ENCODE measurements at regions of chr16 and their contacts with region 1.

Region 1: GRCh38 chr16:53022374-53022773 is 30.3 kb downstream of the CHD9NB start:
- DNase-seq: peak; percentile 13
- ATAC-seq: peak; percentile 87
- H3K4me3 ChIP-seq: no peak overlapping the region
- H3K27ac ChIP-seq: no peak overlapping the region
- H3K4me1 ChIP-seq: no peaks in the 10 kb centered on the region
- H3K27me3 ChIP-seq: no peaks in the 10 kb centered on the region
- CTCF ChIP-seq: peak; percentile 70

Region 2: GRCh38 chr16:52068447-52069074 is 953.8 kb before region 1 on chr16:
- CTCF ChIA-PET with region 1: no interaction called
- POLR2A ChIA-PET with region 1: no interaction called
- in situ Hi-C with region 1: no loop called
- intact Hi-C with region 1: loop called (anchors 10 kb)
- DNase-seq: no peak
- ATAC-seq: no peak
- H3K4me3 ChIP-seq: no peak overlapping the region
- H3K27ac ChIP-seq: no peak overlapping the region
- H3K4me1 ChIP-seq: no peaks in the 10 kb centered on the region
- H3K27me3 ChIP-seq: no peaks in the 10 kb centered on the region
- CTCF ChIP-seq: peak; percentile 32; the same call in 1 of the 2 replicates

Region 3: GRCh38 chr16:52191531-52192134 is 830.7 kb before region 1 on chr16:
- CTCF ChIA-PET with region 1: interaction called, 3 read pairs
- POLR2A ChIA-PET with region 1: no interaction called
- in situ Hi-C with region 1: no loop called
- intact Hi-C with region 1: loop called (anchors 5 kb)
- DNase-seq: peak; percentile 43
- ATAC-seq: no peak
- H3K4me3 ChIP-seq: no peak overlapping the region
- H3K27ac ChIP-seq: no peak overlapping the region
- H3K4me1 ChIP-seq: no peaks in the 10 kb centered on the region
- H3K27me3 ChIP-seq: no peaks in the 10 kb centered on the region
- CTCF ChIP-seq: peak; percentile 84

Region 4: GRCh38 chr16:52964290-52964689 is 58.1 kb before region 1 on chr16:
- CTCF ChIA-PET with region 1: no interaction called
- POLR2A ChIA-PET with region 1: no interaction called
- in situ Hi-C with region 1: no loop called
- intact Hi-C with region 1: no loop called
- DNase-seq: no peak
- ATAC-seq: no peak
- H3K4me3 ChIP-seq: no peak overlapping the region
- H3K27ac ChIP-seq: no peak overlapping the region
- H3K4me1 ChIP-seq: no peaks in the 10 kb centered on the region
- H3K27me3 ChIP-seq: no peaks in the 10 kb centered on the region
- CTCF ChIP-seq: no peak

Region 5: DNA sequence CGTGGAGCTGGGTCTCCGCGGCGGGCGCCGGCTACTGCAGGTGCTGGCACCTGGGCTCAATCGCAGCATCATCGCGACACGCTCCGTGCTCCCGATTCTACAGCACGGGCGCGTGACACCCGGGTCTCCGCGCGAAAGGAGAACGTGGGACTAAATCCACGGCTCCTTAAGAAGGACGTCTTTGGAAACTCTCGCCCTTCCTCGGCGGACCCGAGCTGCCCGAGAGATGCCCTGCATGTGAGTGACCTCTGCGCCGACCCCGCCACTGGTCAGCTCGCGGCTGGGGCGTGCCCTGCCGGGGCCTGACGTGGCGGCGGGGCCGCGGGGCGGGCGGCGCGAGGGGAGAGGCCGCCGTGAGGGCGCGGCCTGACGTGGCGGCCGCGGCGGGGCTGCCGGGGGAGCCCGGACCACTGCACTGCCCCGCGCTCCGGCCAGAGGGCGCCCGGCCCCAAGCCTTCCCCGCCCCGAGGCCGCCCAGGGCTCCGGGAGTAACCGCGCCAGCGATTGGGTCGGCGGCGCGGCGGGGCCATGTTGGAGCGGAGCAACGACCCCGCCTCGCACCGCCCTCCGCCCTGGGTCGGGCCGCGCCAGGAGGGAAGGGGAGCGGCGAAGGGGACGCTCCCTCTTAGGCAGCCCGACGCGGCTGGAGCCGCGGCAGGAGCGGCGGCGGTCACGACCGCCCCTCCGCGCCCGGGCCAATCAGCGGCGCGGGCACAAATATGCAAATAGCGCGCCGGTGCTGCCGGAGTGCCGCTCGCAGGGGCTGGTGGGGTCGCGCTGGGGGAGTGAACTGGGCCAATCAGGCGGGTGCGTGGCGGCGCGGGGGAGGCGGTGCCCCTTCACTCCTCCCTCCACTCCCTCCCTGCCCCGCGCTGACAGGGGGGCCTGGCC is 108.0 kb after region 1 on chr16:
- CTCF ChIA-PET with region 1: no interaction called
- POLR2A ChIA-PET with region 1: no interaction called
- in situ Hi-C with region 1: no loop called
- intact Hi-C with region 1: no loop called
- DNase-seq: peak; percentile 33
- ATAC-seq: peak; percentile 94
- H3K4me3 ChIP-seq: peak overlapping the region; percentile 59 to 66
- H3K27ac ChIP-seq: peak overlapping the region; percentile 81
- H3K4me1 ChIP-seq: peaks cover 9% of the 10 kb centered on the region
- H3K27me3 ChIP-seq: no peaks in the 10 kb centered on the region
- CTCF ChIP-seq: peak; percentile 84

Region 6: DNA sequence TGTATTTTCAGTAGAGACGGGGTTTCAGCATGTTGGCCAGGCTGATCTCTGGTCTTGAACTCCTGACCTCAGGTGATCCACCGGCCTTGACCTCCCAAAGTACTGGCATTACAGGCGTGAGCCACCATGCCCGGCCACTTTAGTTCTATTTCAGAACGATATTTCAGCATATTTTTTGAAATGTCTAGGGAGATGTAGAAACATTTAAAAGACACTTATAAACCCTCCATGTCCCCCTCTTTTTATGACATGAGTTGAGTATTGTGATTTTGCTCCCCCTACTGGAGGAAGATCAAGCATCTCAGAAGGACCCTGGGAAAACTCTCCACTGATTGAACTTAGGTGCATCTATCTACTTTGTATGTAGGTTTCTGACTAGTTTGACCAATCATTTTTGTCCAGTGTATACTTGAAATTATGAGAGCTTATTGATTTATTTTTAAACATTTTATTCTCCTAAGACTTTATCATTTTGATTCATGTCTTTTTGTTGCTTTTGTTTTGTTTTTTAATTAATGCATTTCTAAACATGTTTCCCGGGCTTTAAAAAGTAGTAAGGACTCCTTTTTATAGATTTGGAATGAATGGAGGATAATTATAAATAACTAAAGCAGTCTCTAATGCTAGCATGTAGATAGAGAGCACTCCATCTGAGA is 137.5 kb after region 1 on chr16:
- CTCF ChIA-PET with region 1: no interaction called
- POLR2A ChIA-PET with region 1: no interaction called
- in situ Hi-C with region 1: no loop called
- intact Hi-C with region 1: no loop called
- DNase-seq: peak; percentile 7
- ATAC-seq: 0 out of 2 replicates have a peak, but pooled peaks have one; percentile 63
- H3K4me3 ChIP-seq: no peak overlapping the region
- H3K27ac ChIP-seq: no peak overlapping the region
- H3K4me1 ChIP-seq: no peaks in the 10 kb centered on the region
- H3K27me3 ChIP-seq: no peaks in the 10 kb centered on the region
- CTCF ChIP-seq: peak; percentile 72

Region 7: GRCh38 chr16:53257001-53257400 is 234.6 kb after region 1 on chr16:
- CTCF ChIA-PET with region 1: no interaction called
- POLR2A ChIA-PET with region 1: no interaction called
- in situ Hi-C with region 1: no loop called
- intact Hi-C with region 1: no loop called
- DNase-seq: no peak
- ATAC-seq: no peak
- H3K4me3 ChIP-seq: no peak overlapping the region
- H3K27ac ChIP-seq: no peak overlapping the region
- H3K4me1 ChIP-seq: no peaks in the 10 kb centered on the region
- H3K27me3 ChIP-seq: no peaks in the 10 kb centered on the region
- CTCF ChIP-seq: no peak

Measured in Panc1 (cell line).